OCI-LY7 (cell line): ENCODE measurements at regions of chrX and their contacts with region 1.

Region 1: GRCh38 chrX:54639346-54640102 is 109.5 kb downstream of the GNL3L start:
- DNase-seq: peak; percentile 97
- H3K4me3 ChIP-seq: peak overlapping the region; percentile 68
- H3K27ac ChIP-seq: peak overlapping the region; percentile 82
- H3K4me1 ChIP-seq: peaks cover 28% of the 10 kb centered on the region
- CTCF ChIP-seq: peak; percentile 71

Region 2: DNA sequence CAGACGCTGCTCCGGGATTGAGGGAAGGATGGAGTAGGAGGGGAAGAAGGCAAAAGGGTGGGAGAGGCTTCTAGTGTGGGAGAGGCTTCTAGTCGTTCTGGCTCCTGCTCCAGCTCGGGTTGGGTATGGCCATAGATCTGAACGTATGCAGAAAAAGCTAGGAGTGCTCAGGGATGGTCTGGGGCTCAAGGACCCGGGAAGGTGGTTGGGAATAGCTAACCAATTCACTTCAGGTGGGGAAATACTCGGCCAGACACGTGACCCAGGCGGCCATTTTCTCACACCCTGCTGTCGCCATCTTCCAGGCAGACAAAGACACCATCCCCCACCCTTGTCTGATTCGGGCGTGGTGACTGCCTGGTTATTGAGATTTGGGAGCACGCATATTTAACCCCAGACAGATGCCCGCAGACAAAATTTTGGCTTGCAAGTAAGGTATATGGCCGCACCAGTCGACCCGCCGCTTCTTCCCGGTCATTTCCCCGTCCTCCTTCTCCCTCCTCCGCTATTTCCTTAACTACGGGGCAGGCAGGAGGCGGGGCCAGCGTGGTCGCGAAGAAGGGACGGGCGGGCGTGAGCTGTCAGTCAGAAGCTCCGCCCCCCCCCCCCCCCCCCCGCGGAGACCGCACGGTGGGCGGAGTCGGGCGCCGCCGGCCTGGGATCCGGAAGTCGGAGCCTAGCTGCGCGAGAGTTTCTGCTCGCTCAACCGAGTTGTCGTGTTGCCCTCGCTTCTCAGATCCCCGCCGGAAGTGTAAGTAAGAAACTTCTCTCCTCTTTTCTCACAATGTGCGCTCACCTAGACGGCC is 109.8 kb before region 1 on chrX and contains the start of gene GNL3L:
- CTCF ChIA-PET with region 1: no interaction called
- POLR2A ChIA-PET with region 1: no interaction called
- intact Hi-C with region 1: loop called (anchors 1 kb)
- DNase-seq: peak; percentile 88
- H3K4me3 ChIP-seq: peak within 1 kb of the TSS; percentile 99
- H3K27ac ChIP-seq: peak within 1 kb of the TSS; percentile 76
- H3K4me1 ChIP-seq: peaks cover 31% of the 10 kb centered on the region
- CTCF ChIP-seq: no peak
- total RNA-seq, gene GNL3L: 45.1 and 45.7 TPM in 2 replicates

Region 3: GRCh38 chrX:54776061-54776460 is 136.5 kb after region 1 on chrX:
- CTCF ChIA-PET with region 1: no interaction called
- POLR2A ChIA-PET with region 1: no interaction called
- intact Hi-C with region 1: no loop called
- DNase-seq: no peak
- H3K4me3 ChIP-seq: no peak overlapping the region
- H3K27ac ChIP-seq: no peak overlapping the region
- H3K4me1 ChIP-seq: no peaks in the 10 kb centered on the region
- CTCF ChIP-seq: no peak

Region 4: DNA sequence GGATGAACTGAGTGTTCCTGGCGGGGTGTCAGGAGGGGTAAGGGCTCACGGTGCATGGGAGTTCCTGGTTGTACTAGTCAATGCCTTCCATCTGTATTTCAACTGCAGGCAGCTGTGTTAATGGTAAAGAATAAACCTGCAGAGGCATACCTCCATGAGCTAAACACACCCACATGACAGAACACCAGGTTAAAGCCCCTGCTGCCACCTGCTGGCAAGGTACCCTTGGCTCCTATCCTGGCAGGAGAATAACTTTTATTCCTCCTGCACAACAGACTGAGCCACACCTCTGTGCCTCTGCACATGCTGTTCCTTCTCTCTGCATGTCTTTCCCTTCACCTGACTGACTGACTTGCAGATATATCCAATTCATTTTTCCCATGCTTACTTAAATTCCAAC is 147.4 kb after region 1 on chrX:
- CTCF ChIA-PET with region 1: no interaction called
- POLR2A ChIA-PET with region 1: no interaction called
- intact Hi-C with region 1: loop called (anchors 1 kb)
- DNase-seq: peak; percentile 33
- H3K4me3 ChIP-seq: no peak overlapping the region
- H3K27ac ChIP-seq: no peak overlapping the region
- H3K4me1 ChIP-seq: no peaks in the 10 kb centered on the region
- CTCF ChIP-seq: peak; percentile 61

Region 5: DNA sequence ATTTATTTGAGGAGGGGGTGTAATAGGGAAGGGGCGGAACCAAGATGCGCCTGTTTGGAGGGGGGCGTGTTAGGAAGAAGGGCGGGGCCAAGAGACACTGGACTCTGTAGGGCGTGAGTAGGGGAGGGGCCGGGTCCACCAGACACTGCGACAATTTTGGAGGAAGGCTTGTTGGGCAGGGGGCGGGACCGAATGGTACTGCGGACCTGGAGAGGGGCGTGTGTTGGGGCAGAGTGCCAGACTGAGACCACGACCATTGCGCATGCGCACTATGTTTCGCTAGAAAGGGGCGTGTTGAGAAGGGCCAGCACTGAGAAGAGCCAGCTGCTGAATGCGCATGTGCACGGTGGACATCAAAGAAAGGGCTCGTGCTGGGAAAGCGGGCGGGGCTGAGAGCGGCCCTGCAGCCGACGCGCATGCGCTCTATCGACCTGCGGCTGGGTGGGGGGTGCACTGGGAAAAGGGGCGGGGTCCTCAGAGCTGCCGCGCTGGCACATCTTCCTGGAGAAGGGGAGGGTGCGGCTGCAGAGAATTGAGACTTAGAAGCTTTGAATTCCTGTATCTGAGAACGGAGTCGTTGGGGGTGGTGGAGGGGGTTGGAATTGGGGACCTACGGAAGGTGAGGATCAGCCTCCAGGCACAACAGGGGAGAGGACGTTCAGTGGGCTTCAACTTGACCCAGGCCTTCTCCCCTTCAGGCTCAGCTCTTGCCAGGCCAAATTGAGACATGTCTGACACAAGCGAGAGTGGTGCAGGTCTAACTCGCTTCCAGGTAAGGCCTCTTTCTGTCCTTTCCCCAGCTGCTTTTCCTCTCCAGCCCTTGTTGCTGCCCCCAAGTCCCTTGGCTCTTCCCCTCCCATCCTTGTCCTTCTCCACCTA is 169.3 kb after region 1 on chrX:
- CTCF ChIA-PET with region 1: no interaction called
- POLR2A ChIA-PET with region 1: interaction called, 3 read pairs
- intact Hi-C with region 1: loop called (anchors 2 kb)
- DNase-seq: peak; percentile 93
- H3K4me3 ChIP-seq: peak overlapping the region; percentile 82
- H3K27ac ChIP-seq: no peak overlapping the region
- H3K4me1 ChIP-seq: peaks cover 14% of the 10 kb centered on the region
- CTCF ChIP-seq: no peak

Region 6: DNA sequence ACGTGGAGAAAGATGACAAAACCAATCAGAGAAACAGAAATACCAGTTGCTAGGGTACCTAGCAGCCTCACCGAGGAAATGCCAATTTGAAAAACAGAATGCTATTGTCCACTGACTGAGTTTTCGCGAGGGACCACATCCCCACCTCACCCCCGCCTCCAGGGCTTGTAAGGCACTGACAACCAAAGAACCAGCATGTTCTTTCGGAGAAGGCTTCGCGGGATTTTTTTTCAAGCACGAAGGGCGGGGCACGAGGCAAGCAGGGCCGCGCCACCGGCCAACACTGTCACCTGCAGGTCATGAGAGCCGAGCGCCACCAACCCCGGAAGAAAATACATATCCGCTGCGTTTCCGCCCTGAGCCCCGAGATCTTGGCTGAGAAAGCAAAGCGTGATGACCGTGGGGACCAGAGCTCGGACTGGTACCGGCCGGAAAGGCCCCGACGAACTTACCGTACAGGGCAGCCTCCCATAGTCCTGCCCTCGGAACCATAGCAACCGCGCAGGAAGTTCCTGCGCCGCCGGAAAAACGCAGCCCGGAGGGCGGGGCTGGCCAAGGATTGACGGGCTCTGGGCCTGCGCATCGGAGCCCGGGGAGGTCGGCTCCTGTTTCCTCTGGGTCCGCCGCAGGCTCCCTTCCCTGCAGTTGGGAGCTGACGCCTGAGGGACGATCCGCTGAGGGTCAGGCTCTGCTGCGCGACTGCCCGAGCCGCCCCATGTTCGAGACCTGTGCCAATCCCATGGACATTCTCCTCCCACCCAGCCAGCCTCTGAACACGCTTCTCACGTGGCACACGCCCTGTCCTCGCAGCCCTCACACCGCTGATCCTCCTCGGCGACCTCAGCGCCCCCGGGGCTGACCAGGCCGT is 521.4 kb after region 1 on chrX:
- CTCF ChIA-PET with region 1: interaction called, 3 read pairs
- POLR2A ChIA-PET with region 1: interaction called, 3 read pairs
- intact Hi-C with region 1: loop called (anchors 2 kb)
- DNase-seq: peak; percentile 87
- H3K4me3 ChIP-seq: peak overlapping the region; percentile 73
- H3K27ac ChIP-seq: peak overlapping the region; percentile 90
- H3K4me1 ChIP-seq: peaks cover 14% of the 10 kb centered on the region
- CTCF ChIP-seq: peak; percentile 70

Region 7: DNA sequence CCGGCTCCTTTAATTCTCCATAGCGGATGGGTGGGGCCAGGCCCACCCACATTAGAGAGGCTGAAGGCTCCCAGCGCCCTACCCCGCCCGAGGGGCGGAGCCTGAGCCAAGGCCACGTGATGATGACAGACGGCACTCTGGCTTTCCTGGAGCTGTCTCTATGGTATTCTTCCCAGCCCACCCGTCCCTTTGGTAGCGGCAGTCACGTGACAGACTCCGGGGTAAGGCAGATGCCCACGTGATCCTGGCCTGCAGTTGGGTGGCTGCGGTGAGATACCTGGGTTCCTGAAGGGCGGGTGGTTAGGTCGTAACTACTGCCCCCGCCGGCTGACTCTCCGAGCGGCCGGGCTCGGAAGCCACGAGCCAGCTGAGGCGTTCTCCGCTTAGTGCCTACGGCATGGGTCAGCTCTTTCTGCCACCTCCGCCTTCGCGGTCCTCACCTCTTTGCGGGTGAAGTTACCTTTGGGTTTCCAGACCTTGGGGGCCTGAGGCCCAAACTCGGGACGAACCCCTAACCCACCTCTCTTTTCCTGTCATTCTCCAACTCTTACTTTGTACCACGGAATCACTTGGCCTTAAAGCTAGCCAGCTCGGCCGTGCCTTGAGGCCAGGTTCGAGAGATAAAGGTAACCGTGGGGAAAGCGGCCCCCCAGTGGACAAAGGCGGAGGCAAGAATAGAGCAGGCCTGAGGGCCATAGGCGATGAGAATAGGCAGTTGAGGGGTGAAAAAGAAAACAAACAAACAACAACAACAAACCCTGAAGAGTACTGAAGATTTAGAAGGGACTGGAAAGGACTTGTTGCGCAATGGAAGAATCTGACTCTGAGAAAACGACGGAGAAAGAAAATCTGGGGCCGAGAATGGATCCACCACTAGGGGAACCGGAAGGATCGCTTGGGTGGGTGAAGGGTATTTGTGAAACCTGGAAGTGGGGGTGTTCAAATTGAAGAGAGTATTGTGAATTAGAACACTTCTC is 1078.3 kb after region 1 on chrX and contains the start of gene RRAGB:
- CTCF ChIA-PET with region 1: interaction called, 25 read pairs
- POLR2A ChIA-PET with region 1: no interaction called
- intact Hi-C with region 1: no loop called
- DNase-seq: peak; percentile 94
- H3K4me3 ChIP-seq: peak within 1 kb of the TSS; percentile 85
- H3K27ac ChIP-seq: peak within 1 kb of the TSS; percentile 66
- H3K4me1 ChIP-seq: peaks cover 10% of the 10 kb centered on the region
- CTCF ChIP-seq: peak; percentile 83
- total RNA-seq, gene RRAGB: 9.6 and 10.4 TPM in 2 replicates